ENCODE measurements at regions of chr20 and their contacts with region 1.

Region 1: GRCh38 chr20:37534401-37535157 is 6.9 kb upstream of the BLCAP start:
- DNase-seq: peak; percentile 70
- ATAC-seq: peak; percentile 92
- H3K4me3 ChIP-seq: no peak overlapping the region
- H3K27ac ChIP-seq: no peak overlapping the region
- H3K4me1 ChIP-seq: peaks cover 0 to 2% of the 10 kb centered on the region in 2 experiments; a peak in 1 of 4 replicates
- H3K27me3 ChIP-seq: no peaks in the 10 kb centered on the region
- CTCF ChIP-seq: peak; percentile 76 to 89 (median 88)
- POLR2A ChIP-seq: no peak
- RAD21 ChIP-seq: peak; percentile 95

Region 2: GRCh38 chr20:37192137-37192854 is 342.3 kb before region 1 on chr20:
- CTCF ChIA-PET with region 1: interaction called, 8 read pairs
- POLR2A ChIA-PET with region 1: no interaction called
- RAD21 ChIA-PET with region 1: no interaction called
- intact Hi-C with region 1: loop called (anchors 2 kb)
- DNase-seq: peak; percentile 43
- ATAC-seq: peak; percentile 90
- H3K4me3 ChIP-seq: no peak overlapping the region
- H3K27ac ChIP-seq: no peak overlapping the region
- H3K4me1 ChIP-seq: peaks cover 0 to 7% of the 10 kb centered on the region in 2 experiments; a peak in 1 of 4 replicates
- H3K27me3 ChIP-seq: no peaks in the 10 kb centered on the region
- CTCF ChIP-seq: peak; percentile 50 to 95 (median 90); a peak in 5 of 6 replicates
- POLR2A ChIP-seq: no peak
- RAD21 ChIP-seq: peak; percentile 31; the same call in 1 of the 2 replicates

Region 3: DNA sequence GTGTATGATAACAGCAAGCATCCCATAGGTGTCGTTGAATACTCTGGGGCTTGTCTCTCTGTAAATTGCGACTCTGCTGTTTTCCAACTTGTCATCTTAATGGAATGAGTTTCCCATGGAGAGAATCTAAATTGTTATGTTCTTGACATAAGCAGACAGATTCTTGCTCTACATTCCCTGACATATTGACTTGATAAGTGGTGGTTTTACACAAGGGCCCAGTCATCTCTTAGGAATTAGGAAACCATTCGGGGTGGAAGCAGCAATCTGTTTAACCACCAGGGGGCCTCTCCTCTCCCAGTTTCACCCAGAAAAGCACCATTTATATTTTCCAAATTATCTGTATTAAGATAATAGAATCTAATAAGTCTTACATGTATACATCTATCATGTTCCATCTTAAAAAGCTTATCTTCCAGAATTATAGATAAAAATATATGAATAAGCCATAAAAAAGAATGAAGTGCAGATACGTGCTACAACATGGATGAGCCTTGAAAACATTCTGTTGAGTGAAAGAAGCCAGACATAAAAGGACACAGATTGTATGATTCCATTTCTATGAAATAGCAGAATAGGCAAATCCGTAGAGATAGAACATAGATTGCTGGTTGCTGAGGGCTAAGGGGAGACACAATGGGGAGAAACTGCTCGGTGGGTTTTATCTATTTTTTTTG is 332.2 kb before region 1 on chr20:
- CTCF ChIA-PET with region 1: interaction called, 3 read pairs
- POLR2A ChIA-PET with region 1: no interaction called
- RAD21 ChIA-PET with region 1: no interaction called
- intact Hi-C with region 1: loop called (anchors 1 kb)
- DNase-seq: peak; percentile 35
- ATAC-seq: peak; percentile 85
- H3K4me3 ChIP-seq: no peak overlapping the region
- H3K27ac ChIP-seq: no peak overlapping the region; the same call in 1 of the 2 replicates
- H3K4me1 ChIP-seq: peaks cover 6 to 7% of the 10 kb centered on the region in 2 experiments; a peak in 3 of 4 replicates
- H3K27me3 ChIP-seq: no peaks in the 10 kb centered on the region
- CTCF ChIP-seq: peak; percentile 49 to 84 (median 78); a peak in 5 of 6 replicates
- POLR2A ChIP-seq: no peak
- RAD21 ChIP-seq: peak; percentile 42

Region 4: DNA sequence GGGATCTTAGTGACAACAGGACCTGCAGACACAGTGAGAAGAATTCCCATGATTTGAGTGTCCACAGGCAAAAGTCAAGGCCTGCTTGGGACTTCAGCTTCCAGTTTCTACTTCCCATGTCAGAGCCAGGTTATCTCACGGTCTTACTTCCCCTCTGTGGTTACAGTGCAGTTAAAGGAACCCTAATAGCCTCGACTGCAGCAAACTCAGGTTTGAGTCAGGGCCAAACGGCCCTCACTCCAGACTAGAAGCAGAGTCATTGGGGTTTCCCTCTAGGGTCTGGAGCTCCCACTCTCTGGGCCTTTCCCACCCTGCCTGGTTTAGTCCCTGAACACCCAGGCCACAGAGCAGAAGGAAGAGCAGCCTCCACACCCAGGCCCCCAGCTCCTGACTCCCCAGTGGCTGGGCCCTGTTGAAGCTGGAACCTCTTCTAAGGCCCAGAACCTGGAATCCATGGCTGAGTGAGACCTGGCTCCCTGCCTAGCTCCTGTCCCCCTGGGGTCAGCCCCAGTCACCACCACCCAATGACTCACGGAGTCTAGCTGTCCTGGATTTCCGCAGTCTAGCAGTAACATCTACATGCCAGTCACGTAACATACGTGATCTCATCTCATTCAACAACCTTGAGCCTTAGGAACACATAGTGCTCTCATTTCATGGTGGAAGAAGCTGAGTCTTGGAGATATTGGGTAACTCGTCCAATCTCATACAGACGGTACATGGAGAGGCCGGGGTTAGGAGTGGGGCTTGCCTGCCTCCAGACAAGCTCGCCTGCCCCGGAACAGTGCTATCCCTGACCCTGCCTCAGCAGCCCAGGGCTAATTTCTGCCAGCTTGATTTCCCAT is 263.8 kb before region 1 on chr20:
- CTCF ChIA-PET with region 1: interaction called, 14 read pairs
- POLR2A ChIA-PET with region 1: no interaction called
- RAD21 ChIA-PET with region 1: interaction called in 1 of 2 experiments, 3 read pairs
- intact Hi-C with region 1: loop called (anchors 1 kb)
- DNase-seq: no peak
- ATAC-seq: no peak
- H3K4me3 ChIP-seq: no peak overlapping the region
- H3K27ac ChIP-seq: no peak overlapping the region
- H3K4me1 ChIP-seq: peaks cover 3 to 13% of the 10 kb centered on the region in 2 experiments
- H3K27me3 ChIP-seq: no peaks in the 10 kb centered on the region
- CTCF ChIP-seq: no peak
- POLR2A ChIP-seq: no peak
- RAD21 ChIP-seq: no peak

Region 5: DNA sequence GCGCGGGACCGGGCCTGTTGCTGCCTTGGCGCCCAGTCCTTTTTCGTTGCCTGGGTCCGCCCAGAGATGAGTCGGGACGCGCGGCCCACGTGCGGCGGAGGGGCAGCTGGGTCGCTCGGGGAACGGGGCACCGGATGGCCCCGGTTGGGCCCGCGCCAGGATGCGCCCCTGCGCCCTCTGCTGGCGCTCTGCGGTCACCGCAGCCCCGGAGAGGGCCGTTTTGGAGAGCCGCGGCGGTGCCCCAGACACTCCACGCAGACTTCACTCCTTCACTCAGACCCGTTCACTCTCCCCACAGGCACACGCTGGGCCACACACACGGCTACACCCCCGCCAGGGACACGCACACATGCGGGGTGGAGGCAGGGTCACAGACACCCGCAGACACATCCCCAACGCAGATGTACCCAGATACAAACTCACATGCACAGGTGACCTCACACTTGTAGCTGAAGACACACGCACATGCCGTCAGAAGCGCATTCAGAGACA is 149.8 kb before region 1 on chr20:
- CTCF ChIA-PET with region 1: interaction called, 3 read pairs
- POLR2A ChIA-PET with region 1: no interaction called
- RAD21 ChIA-PET with region 1: no interaction called
- intact Hi-C with region 1: loop called (anchors 1 kb)
- DNase-seq: no peak
- ATAC-seq: peak; percentile 64
- H3K4me3 ChIP-seq: 0 out of 4 replicates have a peak overlapping the region, but pooled peaks of 1 of the 2 experiments have one; percentile 18
- H3K27ac ChIP-seq: peak overlapping the region; percentile 56; the same call in 1 of the 2 replicates
- H3K4me1 ChIP-seq: peaks cover 11 to 43% of the 10 kb centered on the region in 2 experiments
- H3K27me3 ChIP-seq: no peaks in the 10 kb centered on the region
- CTCF ChIP-seq: peak in 2 of 3 experiments; percentile 77 to 92; a peak in 5 of 6 replicates
- POLR2A ChIP-seq: no peak
- RAD21 ChIP-seq: peak; percentile 63